Activated CD4-positive, alpha-beta T cell treated with anti-CD3 and anti-CD28 coated beads, Interleukin-2, amount 10 ng/mL, durations not matched to agents 7 days and 5 days (primary cell): ENCODE measurements at regions of chr11 and their contacts with region 1.

Region 1: GRCh38 chr11:6217722-6218121 is 12.4 kb downstream of the C11orf42 start:
- DNase-seq: no peak
- H3K4me3 Mint-ChIP-seq: no peak overlapping the region
- H3K27ac Mint-ChIP-seq: no peak overlapping the region
- H3K4me1 Mint-ChIP-seq: peaks cover 16% of the 10 kb centered on the region
- H3K27me3 Mint-ChIP-seq: no peaks in the 10 kb centered on the region

Region 2: DNA sequence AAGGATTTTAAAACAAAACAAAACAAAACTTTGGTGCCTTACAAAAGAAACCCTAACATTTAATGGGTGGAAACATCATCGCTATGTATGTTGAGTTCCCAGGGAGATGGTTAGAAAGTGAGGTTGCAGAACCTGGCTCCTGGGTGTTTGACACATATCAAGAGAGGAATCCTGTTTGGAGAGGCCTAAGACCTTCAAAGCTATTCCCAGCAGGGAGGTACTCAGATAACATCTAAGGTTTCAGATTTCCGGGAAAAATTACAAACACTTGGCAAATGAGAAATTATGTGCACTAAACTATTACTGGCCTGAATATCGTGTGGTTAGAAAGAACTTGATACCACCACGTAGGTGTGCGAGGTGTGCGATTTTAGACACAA is 551.3 kb before region 1 on chr11:
- CTCF ChIA-PET with region 1: no interaction called
- POLR2A ChIA-PET with region 1: no interaction called
- DNase-seq: no peak
- H3K4me3 Mint-ChIP-seq: no peak overlapping the region
- H3K27ac Mint-ChIP-seq: no peak overlapping the region
- H3K4me1 Mint-ChIP-seq: no peaks in the 10 kb centered on the region
- H3K27me3 Mint-ChIP-seq: no peaks in the 10 kb centered on the region

Region 3: GRCh38 chr11:6203327-6203726 is 14.4 kb before region 1 on chr11:
- CTCF ChIA-PET with region 1: interaction called, 13 read pairs
- POLR2A ChIA-PET with region 1: no interaction called
- DNase-seq: peak; percentile 24
- H3K4me3 Mint-ChIP-seq: no peak overlapping the region
- H3K27ac Mint-ChIP-seq: peak overlapping the region; percentile 1
- H3K4me1 Mint-ChIP-seq: peaks cover 31% of the 10 kb centered on the region
- H3K27me3 Mint-ChIP-seq: no peaks in the 10 kb centered on the region